GM12878 (cell line): ENCODE measurements at regions of chr1 and their contacts with region 1.

Region 1: GRCh38 chr1:84433258-84434080 is 35.2 kb downstream of the DNASE2B start:
- DNase-seq: peak; percentile 21
- ATAC-seq: peak; percentile 79
- H3K4me3 ChIP-seq: no peak overlapping the region
- H3K27ac ChIP-seq: no peak overlapping the region
- H3K4me1 ChIP-seq: peaks cover 5% of the 10 kb centered on the region
- H3K27me3 ChIP-seq: no peaks in the 10 kb centered on the region
- CTCF ChIP-seq: peak; percentile 60 to 82 (median 66)
- EP300 ChIP-seq: peak in 1 of 2 experiments; percentile 32; a peak in 1 of 4 replicates
- POLR2A ChIP-seq: no peak
- RAD21 ChIP-seq: peak; percentile 94

Region 2: DNA sequence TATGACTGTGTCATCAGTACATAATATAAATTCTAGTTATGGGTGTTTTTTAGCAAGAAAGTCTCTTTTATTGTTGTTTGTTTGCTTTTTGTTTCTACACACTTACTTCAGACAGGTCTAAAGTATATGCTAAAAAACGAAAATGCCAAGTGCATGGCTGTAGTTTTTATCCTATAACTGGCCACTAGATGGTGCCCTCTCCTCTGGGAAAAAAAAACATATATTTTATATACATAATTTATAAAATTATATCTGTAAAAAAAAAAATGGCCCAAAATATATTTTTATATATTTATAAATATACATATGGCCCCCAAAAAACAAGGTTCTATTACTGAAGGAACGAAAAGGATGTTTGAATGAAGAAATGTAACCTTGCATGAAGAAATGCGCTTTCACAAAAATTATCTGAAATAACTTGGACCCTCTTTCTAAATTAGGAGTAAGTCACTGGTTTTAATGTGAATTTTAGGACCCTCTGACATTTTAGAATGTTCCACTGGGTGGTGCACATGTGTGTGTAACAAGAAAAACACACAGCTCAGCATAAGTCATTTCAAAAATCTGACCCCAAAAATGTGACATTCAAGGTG is 528.1 kb before region 1 on chr1:
- CTCF ChIA-PET with region 1: interaction called, 5 read pairs
- POLR2A ChIA-PET with region 1: no interaction called
- RAD21 ChIA-PET with region 1: no interaction called
- SMC1A ChIA-PET with region 1: interaction called, 5 read pairs
- in situ Hi-C with region 1: no loop called
- intact Hi-C with region 1: loop called (anchors 2 kb)
- DNase-seq: no peak
- ATAC-seq: peak; percentile 35; the same call in 1 of the 3 replicates
- H3K4me3 ChIP-seq: no peak overlapping the region
- H3K27ac ChIP-seq: no peak overlapping the region
- H3K4me1 ChIP-seq: no peaks in the 10 kb centered on the region
- H3K27me3 ChIP-seq: no peaks in the 10 kb centered on the region
- CTCF ChIP-seq: peak; percentile 42 to 51 (median 46); a peak in 5 of 6 replicates
- EP300 ChIP-seq: no peak
- POLR2A ChIP-seq: no peak
- RAD21 ChIP-seq: peak; percentile 49

Region 3: GRCh38 chr1:84143796-84144565 is 289.5 kb before region 1 on chr1 and contains the start of gene PRKACB:
- CTCF ChIA-PET with region 1: interaction called, 33 read pairs
- POLR2A ChIA-PET with region 1: no interaction called
- RAD21 ChIA-PET with region 1: interaction called, 24 read pairs
- SMC1A ChIA-PET with region 1: interaction called, 18 read pairs
- in situ Hi-C with region 1: no loop called
- intact Hi-C with region 1: loop called (anchors 1 kb)
- DNase-seq: peak; percentile 24
- ATAC-seq: peak; percentile 50; the same call in 2 of the 3 replicates
- H3K4me3 ChIP-seq: no peak within 1 kb of the TSS
- H3K27ac ChIP-seq: no peak within 1 kb of the TSS
- H3K4me1 ChIP-seq: no peaks in the 10 kb centered on the region
- H3K27me3 ChIP-seq: no peaks in the 10 kb centered on the region
- CTCF ChIP-seq: no peak
- EP300 ChIP-seq: no peak
- POLR2A ChIP-seq: no peak
- RAD21 ChIP-seq: no peak
- polyA plus RNA-seq, gene PRKACB: 3.1 to 3.3 TPM

Region 4: GRCh38 chr1:84247425-84248220 is 185.8 kb before region 1 on chr1:
- CTCF ChIA-PET with region 1: no interaction called
- POLR2A ChIA-PET with region 1: no interaction called
- RAD21 ChIA-PET with region 1: no interaction called
- SMC1A ChIA-PET with region 1: interaction called, 3 read pairs
- in situ Hi-C with region 1: no loop called
- intact Hi-C with region 1: loop called (anchors 5 kb)
- DNase-seq: no peak
- ATAC-seq: peak; percentile 53
- H3K4me3 ChIP-seq: no peak overlapping the region
- H3K27ac ChIP-seq: no peak overlapping the region
- H3K4me1 ChIP-seq: no peaks in the 10 kb centered on the region
- H3K27me3 ChIP-seq: no peaks in the 10 kb centered on the region
- CTCF ChIP-seq: no peak
- EP300 ChIP-seq: no peak
- POLR2A ChIP-seq: no peak
- RAD21 ChIP-seq: no peak

Region 5: DNA sequence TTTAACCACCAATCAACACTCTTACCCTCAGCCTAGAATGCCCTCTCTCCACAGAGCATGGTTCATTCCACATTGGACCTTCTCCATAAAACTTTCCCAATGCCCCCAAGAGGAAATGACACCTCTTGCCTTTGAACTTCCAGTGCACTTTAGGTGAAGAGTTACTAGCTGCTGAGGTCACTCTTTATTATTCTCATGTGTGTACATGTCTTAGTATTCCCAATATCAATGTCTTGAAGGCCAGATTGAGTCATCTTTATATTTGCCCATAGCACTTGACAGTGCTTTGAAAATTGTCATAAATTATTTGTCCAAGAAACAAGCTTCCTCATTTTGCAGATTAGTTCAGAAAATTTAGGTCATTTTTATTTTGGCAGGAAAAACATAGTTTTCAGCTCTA is 43.2 kb before region 1 on chr1:
- CTCF ChIA-PET with region 1: interaction called, 12 read pairs
- POLR2A ChIA-PET with region 1: interaction called, 4 read pairs
- RAD21 ChIA-PET with region 1: no interaction called
- SMC1A ChIA-PET with region 1: interaction called, 7 read pairs
- in situ Hi-C with region 1: no loop called
- intact Hi-C with region 1: no loop called
- DNase-seq: no peak
- ATAC-seq: no peak
- H3K4me3 ChIP-seq: no peak overlapping the region
- H3K27ac ChIP-seq: no peak overlapping the region
- H3K4me1 ChIP-seq: peaks cover 10% of the 10 kb centered on the region
- H3K27me3 ChIP-seq: no peaks in the 10 kb centered on the region
- CTCF ChIP-seq: no peak
- EP300 ChIP-seq: no peak
- POLR2A ChIP-seq: no peak
- RAD21 ChIP-seq: no peak

Region 6: DNA sequence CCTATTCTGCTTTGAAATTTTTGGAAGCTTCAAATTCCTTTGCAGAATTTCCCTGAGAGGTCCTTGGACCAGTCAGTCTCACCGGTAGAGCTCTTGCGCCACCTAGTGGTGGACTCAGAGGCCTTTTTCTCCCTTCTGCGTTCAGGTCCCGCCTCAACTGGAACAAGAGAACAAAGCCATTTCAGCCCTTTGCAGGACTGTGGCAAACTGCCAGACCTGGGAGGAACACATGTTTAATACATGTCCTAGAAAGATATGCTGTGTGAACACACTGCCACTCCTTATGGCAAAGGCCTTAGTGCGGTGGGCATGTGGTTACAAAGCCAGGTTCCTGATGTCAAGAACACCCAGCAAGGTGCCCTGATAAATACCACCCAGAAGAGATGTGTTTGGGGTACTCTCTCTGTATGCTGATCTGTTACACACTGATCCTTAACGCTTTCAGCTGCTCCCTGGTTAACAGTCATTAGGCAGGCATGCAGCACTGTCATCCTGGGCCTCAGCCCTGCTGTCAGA is 339.0 kb after region 1 on chr1:
- CTCF ChIA-PET with region 1: interaction called, 3 read pairs
- POLR2A ChIA-PET with region 1: no interaction called
- RAD21 ChIA-PET with region 1: no interaction called
- SMC1A ChIA-PET with region 1: interaction called, 3 read pairs
- in situ Hi-C with region 1: no loop called
- intact Hi-C with region 1: loop called (anchors 5 kb)
- DNase-seq: no peak
- ATAC-seq: peak; percentile 96
- H3K4me3 ChIP-seq: no peak overlapping the region
- H3K27ac ChIP-seq: no peak overlapping the region
- H3K4me1 ChIP-seq: no peaks in the 10 kb centered on the region
- H3K27me3 ChIP-seq: no peaks in the 10 kb centered on the region
- CTCF ChIP-seq: peak; percentile 78 to 89 (median 87)
- EP300 ChIP-seq: no peak
- POLR2A ChIP-seq: no peak
- RAD21 ChIP-seq: peak; percentile 93